Breast epithelium (tissue), 4 donors: ENCODE measurements at regions of chr6 and their contacts with region 1.

Region 1: GRCh38 chr6:117352466-117353081 is 73.2 kb downstream of the ROS1 start:
- DNase-seq: no peak
- H3K4me3 ChIP-seq: no peak overlapping the region
- H3K27ac ChIP-seq: no peak overlapping the region
- H3K4me1 ChIP-seq: no peaks in the 10 kb centered on the region
- H3K27me3 ChIP-seq: no peaks in the 10 kb centered on the region
- CTCF ChIP-seq: no peak
- POLR2A ChIP-seq: no peak

Region 2: DNA sequence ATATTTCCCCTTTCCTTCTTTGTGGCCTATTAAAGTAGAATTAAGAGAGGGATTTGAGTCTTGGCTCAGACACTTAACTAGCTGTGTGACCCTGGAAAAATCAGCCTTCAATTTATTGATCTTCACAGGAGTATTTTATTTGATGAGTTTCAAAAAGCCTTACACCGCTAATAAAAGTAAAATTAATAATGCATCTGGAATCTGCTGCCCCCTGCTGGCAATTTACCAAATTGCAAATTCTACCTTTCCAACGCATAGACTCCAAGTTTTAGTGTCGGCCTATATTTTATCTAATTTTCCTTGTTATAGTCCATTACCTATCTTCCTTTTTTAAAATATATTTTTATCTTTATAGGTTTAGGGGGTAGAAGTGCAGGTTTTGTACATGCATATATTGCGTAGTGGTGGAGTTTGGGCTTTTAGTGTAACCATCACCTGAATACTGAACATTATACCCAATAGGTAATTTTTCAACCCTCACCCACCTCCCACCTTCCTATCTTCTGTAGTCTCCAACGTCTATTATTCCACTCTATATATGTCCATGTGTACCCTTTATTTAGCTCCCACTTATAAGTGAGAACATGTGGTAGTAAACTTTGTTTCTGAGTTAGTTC is 203.4 kb after region 1 on chr6:
- intact Hi-C with region 1: loop called (anchors 10 kb)
- DNase-seq: no peak
- H3K4me3 ChIP-seq: no peak overlapping the region
- H3K27ac ChIP-seq: no peak overlapping the region
- H3K4me1 ChIP-seq: no peaks in the 10 kb centered on the region
- H3K27me3 ChIP-seq: no peaks in the 10 kb centered on the region
- CTCF ChIP-seq: peak; percentile 60 to 74 (median 71)
- POLR2A ChIP-seq: no peak

Region 3: GRCh38 chr6:117706504-117706903 is 353.9 kb after region 1 on chr6:
- intact Hi-C with region 1: no loop called
- DNase-seq: no peak
- H3K4me3 ChIP-seq: no peak overlapping the region
- H3K27ac ChIP-seq: no peak overlapping the region
- H3K4me1 ChIP-seq: no peaks in the 10 kb centered on the region
- H3K27me3 ChIP-seq: no peaks in the 10 kb centered on the region
- CTCF ChIP-seq: no peak
- POLR2A ChIP-seq: no peak

Region 4: DNA sequence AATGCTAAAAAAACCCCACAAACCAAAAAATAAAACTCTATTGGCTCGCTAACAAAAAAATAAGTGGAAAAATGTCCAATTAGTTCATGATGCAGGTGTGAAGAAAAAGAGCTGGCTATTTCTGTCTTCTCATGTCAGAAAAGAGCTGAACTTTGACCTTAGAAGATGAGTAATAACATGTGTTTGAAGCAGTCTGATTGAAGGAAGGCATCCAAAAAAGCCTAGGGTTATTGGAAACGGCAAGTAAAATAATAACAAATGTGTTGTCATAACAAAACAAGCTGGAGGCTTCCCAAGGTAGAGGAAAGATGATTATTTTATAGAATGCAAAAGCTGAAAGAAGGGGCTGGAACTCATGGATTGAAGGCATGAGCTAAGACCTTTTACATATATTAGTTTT is 1820.2 kb after region 1 on chr6:
- intact Hi-C with region 1: no loop called
- DNase-seq: no peak
- H3K4me3 ChIP-seq: no peak overlapping the region
- H3K27ac ChIP-seq: no peak overlapping the region
- H3K4me1 ChIP-seq: no peaks in the 10 kb centered on the region
- H3K27me3 ChIP-seq: no peaks in the 10 kb centered on the region
- CTCF ChIP-seq: no peak
- POLR2A ChIP-seq: no peak